Motor neuron (in vitro differentiated cells): ENCODE measurements at regions of chr1 and their contacts with region 1.

Region 1: DNA sequence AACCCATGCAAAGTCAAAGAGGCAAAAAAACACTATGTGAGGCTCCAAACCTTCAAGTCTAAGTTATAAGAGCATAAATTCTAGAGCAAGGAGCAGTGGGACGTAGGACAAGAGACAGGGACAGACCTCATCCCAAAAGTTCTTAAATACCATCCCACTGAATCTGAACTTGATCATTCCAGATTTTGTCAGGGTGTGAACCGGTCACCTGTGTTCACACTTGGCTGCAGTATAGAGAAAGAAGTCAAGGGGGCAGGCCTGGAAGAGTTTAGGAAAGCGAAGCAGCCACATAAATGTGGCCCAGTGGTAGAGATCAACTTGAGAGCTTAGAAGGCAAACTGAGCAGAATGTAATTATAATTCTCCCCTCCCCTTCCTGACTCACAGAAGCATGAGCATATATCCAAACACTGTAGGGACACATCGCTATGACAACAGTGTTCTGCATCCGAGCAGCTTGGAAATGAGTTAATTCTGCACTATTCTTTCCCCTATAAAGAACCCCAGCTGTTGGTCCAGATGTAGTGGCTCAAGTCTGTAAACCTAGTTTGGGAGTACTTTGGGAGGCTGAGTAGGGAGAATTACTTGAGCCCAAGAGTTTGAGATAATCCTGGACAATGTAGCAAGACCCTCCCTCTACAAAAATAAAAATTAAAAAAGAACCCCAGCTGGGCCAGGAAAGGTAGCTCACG is 2.7 kb downstream of the AKR7A2 start:
- ATAC-seq: peak in 2 of 8 experiments; percentile 2 to 7
- H3K4me3 ChIP-seq: no peak overlapping the region
- H3K27ac ChIP-seq: no peak overlapping the region
- H3K4me1 ChIP-seq: peaks cover 13% of the 10 kb centered on the region in 2 donors

Region 2: GRCh38 chr1:18434041-18434440 is 875.2 kb before region 1 on chr1:
- in situ Hi-C with region 1: no loop called
- ATAC-seq: no peak
- H3K4me3 ChIP-seq: no peak overlapping the region
- H3K27ac ChIP-seq: no peak overlapping the region
- H3K4me1 ChIP-seq: no peaks in the 10 kb centered on the region

Region 3: DNA sequence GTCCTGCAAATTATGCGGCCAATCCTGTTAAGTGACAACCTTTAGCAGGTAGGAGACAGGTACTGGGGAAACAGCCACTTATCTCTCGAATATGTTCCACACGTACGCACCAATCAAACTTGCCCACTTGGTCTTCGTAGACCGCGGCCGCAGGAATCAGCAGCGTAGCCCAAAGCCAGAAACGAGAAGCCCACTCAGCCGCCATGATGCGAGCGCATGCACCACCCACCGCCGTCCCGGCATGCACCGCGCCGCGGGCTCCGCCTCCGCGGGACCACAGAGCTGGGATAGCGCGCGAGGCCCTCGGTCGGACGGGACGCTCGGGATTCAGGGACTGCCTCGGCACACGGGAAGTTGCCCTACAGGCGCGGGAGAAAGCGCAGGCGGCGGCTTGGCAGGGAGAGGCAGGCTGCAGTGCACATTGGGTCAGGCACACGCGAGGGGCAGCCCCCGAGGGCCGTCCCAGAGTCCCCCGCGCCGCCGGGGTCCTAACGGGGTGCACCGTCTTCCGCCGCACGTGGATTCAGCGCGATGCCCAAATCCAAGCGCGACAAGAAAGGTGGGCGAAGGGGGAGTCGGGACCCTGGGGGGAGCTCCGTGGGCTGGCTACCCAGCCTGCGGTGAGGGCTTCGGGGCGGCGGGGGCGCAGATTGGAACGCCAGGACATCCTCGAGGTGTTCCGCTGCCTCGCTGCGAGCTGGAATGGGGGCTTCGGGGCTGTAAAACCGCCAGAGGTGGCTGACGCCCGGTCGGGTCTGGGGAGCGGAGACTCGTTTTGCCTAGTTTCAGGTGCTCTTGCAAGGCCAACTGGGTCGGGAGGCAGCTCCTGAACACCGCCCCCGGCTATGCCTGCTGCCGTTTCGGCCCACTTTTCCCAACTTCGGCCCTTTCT is 57.7 kb before region 1 on chr1 and contains the starts of genes EMC1 and MRTO4:
- in situ Hi-C with region 1: loop called in 1 of 9 experiments (anchors 10 kb)
- ATAC-seq: peak; percentile 87 to 96 (median 94)
- H3K4me3 ChIP-seq: peak within 1 kb of the TSS; percentile 55 to 96 (median 74)
- H3K27ac ChIP-seq: peak within 1 kb of the TSS; percentile 99 to 100
- H3K4me1 ChIP-seq: peaks cover 16% of the 10 kb centered on the region in 2 donors
- total RNA-seq, gene EMC1: 58.5 to 80.5 (median 68.0) TPM
- total RNA-seq, gene MRTO4: 32.1 to 67.3 (median 35.7) TPM